B cell (primary cell): ENCODE measurements at regions of chr17 and their contacts with region 1.

Region 1: GRCh38 chr17:4420692-4421131 is 13.0 kb upstream of the SPNS3 start:
- DNase-seq: peak; percentile 83
- ATAC-seq: peak; percentile 94
- H3K4me3 ChIP-seq: no peak overlapping the region
- H3K4me3 Mint-ChIP-seq: no peak overlapping the region
- H3K27ac ChIP-seq: no peak overlapping the region
- H3K27ac Mint-ChIP-seq: no peak overlapping the region
- H3K4me1 ChIP-seq: peaks cover 4% of the 10 kb centered on the region in 2 donors
- H3K4me1 Mint-ChIP-seq: peaks cover 3% of the 10 kb centered on the region
- H3K27me3 ChIP-seq: no peaks in the 10 kb centered on the region
- H3K27me3 Mint-ChIP-seq: no peaks in the 10 kb centered on the region
- CTCF ChIP-seq: peak; percentile 84

Region 2: DNA sequence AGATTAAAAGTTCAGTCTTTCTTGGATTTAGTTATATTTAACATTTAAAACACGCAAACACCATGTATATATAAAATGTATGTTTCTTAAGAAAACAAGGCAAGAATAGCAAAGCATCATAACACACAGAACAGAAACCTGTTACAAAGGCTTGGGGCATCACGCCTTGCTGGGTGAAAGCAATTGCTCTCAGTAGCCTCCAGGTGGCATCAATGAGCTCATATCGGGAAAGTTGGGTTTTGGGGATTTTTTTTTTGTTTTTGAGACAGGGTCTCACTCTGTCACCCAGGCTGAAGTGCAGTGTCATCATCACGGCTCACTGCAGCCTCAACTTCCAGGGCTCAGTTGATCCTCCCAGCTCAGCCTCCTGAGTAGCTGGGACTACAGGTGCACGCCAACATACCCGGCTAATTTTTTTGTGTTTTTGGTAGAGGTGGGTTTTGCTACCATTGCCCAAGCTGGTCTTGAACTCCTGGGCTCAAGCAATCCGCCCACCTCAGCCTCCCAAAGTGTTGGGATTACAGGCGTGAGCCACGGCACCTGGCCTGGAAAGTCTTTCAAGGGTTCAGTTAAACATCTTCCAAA is 220.8 kb before region 1 on chr17:
- CTCF ChIA-PET with region 1: interaction called, 12 read pairs
- POLR2A ChIA-PET with region 1: no interaction called
- intact Hi-C with region 1: no loop called
- DNase-seq: peak; percentile 58
- ATAC-seq: peak; percentile 70
- H3K4me3 ChIP-seq: no peak overlapping the region
- H3K4me3 Mint-ChIP-seq: no peak overlapping the region
- H3K27ac ChIP-seq: no peak overlapping the region
- H3K27ac Mint-ChIP-seq: no peak overlapping the region
- H3K4me1 ChIP-seq: no peaks in the 10 kb centered on the region
- H3K4me1 Mint-ChIP-seq: no peaks in the 10 kb centered on the region
- H3K27me3 ChIP-seq: no peaks in the 10 kb centered on the region
- H3K27me3 Mint-ChIP-seq: no peaks in the 10 kb centered on the region
- CTCF ChIP-seq: peak; percentile 85

Region 3: GRCh38 chr17:4786106-4786511 is 365.4 kb after region 1 on chr17 and contains the start of gene VMO1:
- CTCF ChIA-PET with region 1: no interaction called
- POLR2A ChIA-PET with region 1: no interaction called
- intact Hi-C with region 1: no loop called
- DNase-seq: peak; percentile 42
- ATAC-seq: no peak
- H3K4me3 ChIP-seq: no peak within 1 kb of the TSS
- H3K4me3 Mint-ChIP-seq: peak within 1 kb of the TSS; percentile 59
- H3K27ac ChIP-seq: no peak within 1 kb of the TSS
- H3K27ac Mint-ChIP-seq: no peak within 1 kb of the TSS
- H3K4me1 ChIP-seq: peaks cover 28 to 34% of the 10 kb centered on the region in 2 donors
- H3K4me1 Mint-ChIP-seq: peaks cover 29% of the 10 kb centered on the region
- H3K27me3 ChIP-seq: peaks cover 0 to 70% (median 43%) of the 10 kb centered on the region in 4 experiments
- H3K27me3 Mint-ChIP-seq: peaks cover 44% of the 10 kb centered on the region
- CTCF ChIP-seq: no peak
- total RNA-seq, gene VMO1: not detected in 2 replicates